ENCODE measurements at regions of chr19 and their contacts with region 1.

Region 1: DNA sequence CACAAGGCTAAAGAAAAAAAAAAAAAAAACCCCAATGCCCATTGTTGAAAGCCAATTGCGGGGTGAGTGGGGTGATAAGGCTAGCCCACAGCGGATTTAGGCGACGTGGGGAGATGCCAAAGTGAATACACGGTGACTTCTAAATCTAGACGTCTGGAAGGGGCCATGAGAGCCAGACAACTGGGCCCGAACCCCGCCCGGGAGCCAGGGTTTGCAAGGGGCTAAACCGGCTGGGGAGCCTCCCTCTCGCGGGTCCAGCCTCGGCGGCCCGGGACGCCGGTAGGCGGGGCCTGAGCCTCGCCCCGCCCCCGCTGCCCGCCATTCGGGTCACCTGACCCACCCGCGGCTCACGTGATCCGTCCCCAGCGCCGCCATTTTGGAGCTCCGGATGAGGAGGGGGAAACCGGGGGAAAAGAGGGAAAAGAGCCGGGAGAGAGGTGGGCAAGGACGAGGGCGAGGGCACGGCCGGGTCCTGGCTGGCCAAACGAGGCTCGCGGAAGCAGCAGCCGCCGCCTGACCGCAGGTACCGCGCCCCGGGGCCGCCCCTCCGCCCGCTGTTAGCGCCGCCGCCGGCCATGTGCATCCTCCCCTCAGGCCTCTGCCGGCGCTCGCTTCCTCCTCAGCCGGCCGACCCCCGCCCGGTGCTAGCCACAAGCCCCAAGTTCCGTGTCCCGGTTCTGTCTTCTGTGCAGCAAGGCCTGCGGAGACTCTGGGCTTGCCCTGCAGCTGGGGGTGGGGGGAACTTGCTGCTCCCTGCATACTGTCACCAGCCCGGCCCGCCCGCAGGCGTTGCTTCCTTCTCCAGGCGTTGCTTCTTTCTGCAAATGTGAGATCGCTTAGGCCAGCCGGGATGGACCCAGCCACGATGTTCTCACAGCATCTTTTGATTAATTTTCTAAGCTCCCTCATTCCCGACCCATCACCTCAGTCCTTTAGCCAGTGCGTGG is at the start of gene ZNF507:
- DNase-seq: peak; percentile 58
- ATAC-seq: peak; percentile 89
- H3K4me3 ChIP-seq: peak within 1 kb of the TSS; percentile 94
- H3K27ac ChIP-seq: peak within 1 kb of the TSS; percentile 87
- H3K4me1 ChIP-seq: peaks cover 6% of the 10 kb centered on the region
- H3K27me3 ChIP-seq: no peaks in the 10 kb centered on the region
- CTCF ChIP-seq: peak; percentile 3; the same call in 1 of the 2 replicates
- POLR2A ChIP-seq: peak; percentile 64; the same call in 1 of the 2 replicates
- RAD21 ChIP-seq: no peak
- total RNA-seq, gene ZNF507: 15.0 and 19.9 TPM in 2 replicates

Region 2: GRCh38 chr19:32269831-32270230 is 75.7 kb before region 1 on chr19:
- CTCF ChIA-PET with region 1: no interaction called
- POLR2A ChIA-PET with region 1: no interaction called
- dilution Hi-C with region 1: no loop called
- in situ Hi-C with region 1: no loop called
- intact Hi-C with region 1: no loop called
- DNase-seq: no peak
- ATAC-seq: no peak
- H3K4me3 ChIP-seq: no peak overlapping the region
- H3K27ac ChIP-seq: no peak overlapping the region
- H3K4me1 ChIP-seq: no peaks in the 10 kb centered on the region
- H3K27me3 ChIP-seq: no peaks in the 10 kb centered on the region
- CTCF ChIP-seq: no peak
- POLR2A ChIP-seq: no peak
- RAD21 ChIP-seq: no peak

Region 3: GRCh38 chr19:32373585-32374295 is 28.2 kb after region 1 on chr19:
- CTCF ChIA-PET with region 1: no interaction called
- POLR2A ChIA-PET with region 1: interaction called, 3 read pairs
- dilution Hi-C with region 1: no loop called
- in situ Hi-C with region 1: no loop called
- intact Hi-C with region 1: loop called (anchors 2 kb)
- DNase-seq: peak; percentile 100
- ATAC-seq: peak; percentile 94
- H3K4me3 ChIP-seq: peak overlapping the region; percentile 8; the same call in 1 of the 2 replicates
- H3K27ac ChIP-seq: peak overlapping the region; percentile 95
- H3K4me1 ChIP-seq: peaks cover 14% of the 10 kb centered on the region
- H3K27me3 ChIP-seq: no peaks in the 10 kb centered on the region
- CTCF ChIP-seq: no peak
- POLR2A ChIP-seq: no peak
- RAD21 ChIP-seq: no peak

Region 4: GRCh38 chr19:32405431-32406161 is 60.1 kb after region 1 on chr19 and contains the start of gene DPY19L3:
- CTCF ChIA-PET with region 1: no interaction called
- POLR2A ChIA-PET with region 1: no interaction called
- dilution Hi-C with region 1: no loop called
- in situ Hi-C with region 1: no loop called
- intact Hi-C with region 1: loop called (anchors 2 kb)
- DNase-seq: peak; percentile 91
- ATAC-seq: peak; percentile 95
- H3K4me3 ChIP-seq: peak within 1 kb of the TSS; percentile 82
- H3K27ac ChIP-seq: peak within 1 kb of the TSS; percentile 96
- H3K4me1 ChIP-seq: peaks cover 6% of the 10 kb centered on the region
- H3K27me3 ChIP-seq: no peaks in the 10 kb centered on the region
- CTCF ChIP-seq: no peak
- POLR2A ChIP-seq: peak; percentile 93
- RAD21 ChIP-seq: no peak
- total RNA-seq, gene DPY19L3: 29.6 and 36.4 TPM in 2 replicates

Region 5: DNA sequence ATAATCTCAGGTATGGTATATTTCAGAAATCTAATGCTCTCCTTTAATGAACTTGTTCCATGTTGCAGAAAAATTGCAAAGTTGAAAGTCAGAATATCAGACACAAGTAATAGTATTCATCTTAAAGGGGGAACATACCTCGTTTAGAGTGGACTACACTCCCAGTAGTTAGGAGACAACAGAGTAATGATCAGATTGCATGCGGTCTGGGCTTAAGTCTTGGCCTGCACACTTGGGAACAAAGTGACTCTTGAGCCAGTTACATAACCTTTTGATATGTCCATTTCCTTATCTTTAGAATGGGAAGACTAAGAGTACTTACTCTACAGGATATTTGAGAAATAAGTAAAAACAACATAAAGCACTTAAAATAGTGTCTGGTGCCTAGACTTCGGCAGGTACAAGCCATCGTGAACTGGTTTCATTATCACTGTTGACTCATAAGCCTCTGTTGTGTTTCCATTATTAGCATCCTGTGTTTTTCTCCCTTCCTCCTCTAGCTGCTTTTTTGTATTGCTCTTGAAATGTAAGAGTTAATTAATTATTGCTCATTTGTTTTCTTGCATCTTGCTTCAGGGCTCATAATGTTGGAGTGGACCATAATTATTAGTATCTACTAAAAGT is 113.1 kb after region 1 on chr19:
- CTCF ChIA-PET with region 1: no interaction called
- POLR2A ChIA-PET with region 1: no interaction called
- dilution Hi-C with region 1: no loop called
- in situ Hi-C with region 1: no loop called
- intact Hi-C with region 1: loop called (anchors 10 kb)
- DNase-seq: no peak
- ATAC-seq: no peak
- H3K4me3 ChIP-seq: no peak overlapping the region
- H3K27ac ChIP-seq: no peak overlapping the region
- H3K4me1 ChIP-seq: no peaks in the 10 kb centered on the region
- H3K27me3 ChIP-seq: no peaks in the 10 kb centered on the region
- CTCF ChIP-seq: no peak
- POLR2A ChIP-seq: no peak
- RAD21 ChIP-seq: no peak

Region 6: GRCh38 chr19:32580901-32581703 is 235.6 kb after region 1 on chr19 and contains the start of gene PDCD5:
- CTCF ChIA-PET with region 1: no interaction called
- POLR2A ChIA-PET with region 1: no interaction called
- dilution Hi-C with region 1: no loop called
- in situ Hi-C with region 1: no loop called
- intact Hi-C with region 1: loop called (anchors 5 kb)
- DNase-seq: peak; percentile 89
- ATAC-seq: peak; percentile 98
- H3K4me3 ChIP-seq: peak within 1 kb of the TSS; percentile 81
- H3K27ac ChIP-seq: peak within 1 kb of the TSS; percentile 95
- H3K4me1 ChIP-seq: peaks cover 2% of the 10 kb centered on the region; the same call in 1 of the 2 replicates
- H3K27me3 ChIP-seq: no peaks in the 10 kb centered on the region
- CTCF ChIP-seq: no peak
- POLR2A ChIP-seq: peak; percentile 81
- RAD21 ChIP-seq: no peak
- total RNA-seq, gene PDCD5: 30.6 and 123 TPM in 2 replicates